ENCODE measurements at regions of chr16 and their contacts with region 1.

Region 1: GRCh38 chr16:80084685-80085084 is 456.1 kb upstream of the DYNLRB2 start:
- DNase-seq: no peak
- ATAC-seq: peak; percentile 97

Region 2: DNA sequence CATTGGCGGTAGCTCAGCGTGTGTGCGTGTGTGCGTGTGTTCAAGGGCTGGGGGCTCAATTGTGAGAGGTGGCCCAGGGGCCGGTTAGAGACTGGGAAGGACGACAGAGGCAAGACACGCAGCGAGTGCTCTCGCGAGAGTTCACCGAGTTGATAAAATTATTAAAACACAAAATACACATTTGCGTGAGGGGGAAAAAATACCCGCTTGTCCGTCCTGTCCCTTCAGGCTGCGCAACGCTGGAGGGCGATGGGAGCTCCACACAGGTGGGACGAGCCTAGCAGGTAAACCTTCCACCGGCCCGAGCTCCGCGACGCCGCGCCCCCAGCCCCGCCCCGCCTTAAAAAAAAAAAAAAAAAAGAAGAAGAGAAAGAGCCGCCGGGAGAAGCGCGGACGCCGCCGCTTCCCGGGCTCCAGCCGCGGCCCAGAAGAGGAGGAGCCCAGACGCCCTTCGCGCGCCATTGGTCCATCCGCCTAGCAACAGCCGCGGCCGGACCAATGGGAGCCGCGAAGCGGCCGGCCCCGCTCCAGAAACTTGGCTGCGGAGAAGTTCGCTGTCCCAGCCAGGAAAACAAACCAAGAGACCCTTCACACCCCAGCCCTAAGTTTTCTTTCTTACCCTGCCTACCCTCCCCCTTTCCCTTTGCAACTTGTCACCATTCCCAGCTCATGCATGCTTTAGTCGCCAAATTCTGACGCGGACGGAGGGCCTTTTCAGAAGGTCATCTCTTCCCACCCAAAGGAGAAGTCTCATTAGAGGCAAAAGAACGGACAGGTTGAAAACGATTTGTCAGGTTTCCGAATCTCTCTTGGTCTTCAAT is 314.2 kb before region 1 on chr16:
- intact Hi-C with region 1: loop called (anchors 10 kb)
- DNase-seq: peak; percentile 94
- ATAC-seq: peak; percentile 99

Region 3: DNA sequence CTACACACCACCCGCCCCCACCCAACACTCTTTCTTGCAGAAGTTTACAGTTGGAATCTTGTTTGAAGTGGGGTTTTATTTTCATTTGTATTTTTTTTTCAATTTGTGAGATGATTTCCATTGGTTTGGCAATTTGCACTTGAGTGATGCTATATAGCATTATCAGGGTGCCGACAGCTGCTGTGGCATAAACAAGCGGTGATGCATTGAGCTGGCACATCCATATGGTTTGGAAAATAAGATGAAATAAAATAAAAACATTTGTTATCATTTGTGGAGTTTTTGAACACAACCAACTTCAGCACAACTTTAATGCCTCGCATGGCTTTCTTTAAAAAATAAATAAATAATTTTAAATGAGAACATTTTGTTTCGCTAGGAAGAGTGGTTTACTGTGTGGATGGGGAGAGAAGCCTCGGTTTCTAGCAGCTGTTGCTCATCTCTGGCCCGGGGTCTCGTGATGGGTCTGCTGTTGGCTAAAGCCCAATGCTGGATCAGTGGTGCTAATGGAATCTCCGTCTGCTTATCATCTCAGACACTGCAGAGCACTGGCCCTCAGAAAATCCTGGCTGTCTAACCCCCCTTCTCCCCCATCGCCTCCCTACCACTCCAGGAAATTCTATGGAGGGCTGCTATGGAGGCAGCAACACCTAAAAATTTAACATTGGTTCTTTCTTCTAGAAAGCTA is 291.9 kb before region 1 on chr16:
- intact Hi-C with region 1: no loop called
- DNase-seq: no peak
- ATAC-seq: no peak

Region 4: GRCh38 chr16:80014241-80014939 is 70.3 kb before region 1 on chr16:
- intact Hi-C with region 1: no loop called
- DNase-seq: no peak
- ATAC-seq: no peak

Region 5: DNA sequence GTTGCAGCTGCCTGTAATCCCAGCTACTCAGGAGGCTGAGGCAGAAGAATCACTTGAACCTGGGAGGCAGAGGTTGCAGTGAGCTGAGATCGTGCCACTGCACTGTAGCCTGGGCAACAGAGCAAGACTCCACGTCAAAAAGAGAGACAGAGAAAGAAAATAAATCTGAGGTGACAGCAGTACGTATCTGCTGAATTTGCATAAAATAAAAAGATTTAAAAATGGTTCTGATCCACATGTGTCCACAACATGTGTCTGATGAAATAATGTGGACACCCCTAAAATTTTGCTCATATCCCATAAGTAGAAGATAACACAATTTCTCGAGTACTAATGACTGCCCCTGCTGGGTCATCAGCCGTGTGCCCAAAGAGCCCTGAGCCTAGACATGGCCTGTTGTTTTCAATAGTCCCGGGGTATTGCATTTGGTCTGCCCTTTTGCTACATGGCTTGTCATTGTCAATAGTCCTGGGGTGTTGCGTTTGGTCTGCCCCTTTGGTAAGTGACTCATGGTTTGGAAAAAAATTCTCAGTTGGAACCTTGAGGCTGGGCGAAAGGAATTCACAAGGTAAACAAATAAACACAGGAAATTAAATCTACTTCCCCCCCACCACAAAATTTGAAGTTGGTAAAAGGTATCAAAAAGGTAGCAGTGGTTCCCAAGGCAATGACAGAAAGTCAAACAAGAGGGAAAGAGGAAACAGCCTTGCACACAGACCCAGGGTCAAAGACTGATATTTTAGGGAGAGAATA is 49.6 kb before region 1 on chr16:
- intact Hi-C with region 1: no loop called
- DNase-seq: no peak
- ATAC-seq: no peak

Region 6: DNA sequence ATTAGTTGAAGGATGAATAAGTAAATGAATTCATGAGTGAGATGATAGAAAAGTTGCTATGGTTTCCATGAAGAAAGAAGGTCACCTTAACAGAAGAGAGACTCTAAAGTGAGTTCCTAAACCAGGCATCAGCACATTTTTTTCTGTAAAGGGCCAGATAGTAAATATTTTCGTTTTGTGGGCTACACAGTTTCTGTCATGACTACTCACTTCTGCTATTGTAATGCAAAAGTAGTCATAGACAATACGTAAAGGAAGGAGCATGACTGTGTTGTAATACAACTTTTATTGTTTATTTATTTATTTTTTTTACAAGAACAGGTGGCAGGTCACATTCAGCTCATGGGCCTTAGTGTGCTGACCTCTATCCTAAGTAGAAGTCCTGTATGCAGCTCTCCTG is 30.0 kb after region 1 on chr16:
- intact Hi-C with region 1: no loop called
- DNase-seq: no peak
- ATAC-seq: no peak